ENCODE measurements at regions of chr1 and their contacts with region 1.

Region 1: GRCh38 chr1:56578963-56579875 is at the start of gene PLPP3:
- DNase-seq: peak; percentile 86
- ATAC-seq: peak; percentile 78
- H3K4me3 ChIP-seq: peak within 1 kb of the TSS; percentile 94
- H3K27ac ChIP-seq: peak within 1 kb of the TSS; percentile 68
- H3K4me1 ChIP-seq: peaks cover 33% of the 10 kb centered on the region
- H3K27me3 ChIP-seq: no peaks in the 10 kb centered on the region
- CTCF ChIP-seq: peak; percentile 56
- total RNA-seq, gene PLPP3: 32.8 and 41.0 TPM in 2 replicates

Region 2: DNA sequence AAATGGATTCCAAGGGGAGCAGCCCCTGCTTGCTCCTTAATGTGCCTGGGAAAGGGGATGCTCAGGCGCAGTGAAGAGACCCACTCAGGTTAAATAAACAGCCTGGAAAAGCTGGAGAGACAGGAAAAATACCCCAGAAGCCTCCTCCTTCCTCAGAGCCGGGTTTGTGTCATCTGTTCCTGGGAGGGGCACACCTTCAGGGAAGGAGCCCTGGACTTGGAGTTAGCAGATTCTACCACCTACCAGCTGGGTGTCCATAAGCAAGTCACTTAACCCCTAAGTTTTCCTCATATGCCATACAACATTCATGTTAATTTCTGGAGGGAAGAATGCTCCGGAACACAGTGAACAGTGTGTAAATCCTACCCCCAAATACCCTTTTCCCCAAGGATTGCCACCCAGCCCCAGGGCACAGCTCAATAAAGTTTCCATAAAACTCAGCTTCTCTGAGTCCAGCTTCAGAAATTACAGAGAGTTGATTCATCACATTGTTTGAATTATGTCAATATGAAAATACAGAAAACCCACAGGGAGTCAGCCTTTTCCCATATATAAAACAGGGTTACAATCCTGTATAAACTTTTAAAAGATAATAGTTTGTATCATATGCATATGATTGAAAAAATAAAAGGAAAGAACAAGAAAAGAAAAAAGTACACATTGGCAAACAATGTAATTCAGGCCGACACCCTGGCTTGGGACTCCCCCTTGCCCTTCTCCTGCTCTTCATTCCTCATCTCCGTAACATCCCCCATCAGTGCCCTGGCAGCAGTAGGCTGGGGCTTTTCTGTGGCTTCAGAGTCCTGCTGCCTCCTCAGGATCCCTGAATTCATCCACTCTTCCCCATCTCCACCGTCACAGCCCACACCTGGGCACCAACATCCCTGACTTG is 1072.3 kb before region 1 on chr1:
- CTCF ChIA-PET with region 1: interaction called, 6 read pairs
- POLR2A ChIA-PET with region 1: interaction called, 5 read pairs
- intact Hi-C with region 1: loop called (anchors 1 kb)
- DNase-seq: peak; percentile 96
- ATAC-seq: peak; percentile 78
- H3K4me3 ChIP-seq: peak overlapping the region; percentile 33; the same call in 1 of the 2 replicates
- H3K27ac ChIP-seq: peak overlapping the region; percentile 95
- H3K4me1 ChIP-seq: peaks cover 49% of the 10 kb centered on the region
- H3K27me3 ChIP-seq: no peaks in the 10 kb centered on the region
- CTCF ChIP-seq: peak; percentile 49; the same call in 1 of the 2 replicates

Region 3: GRCh38 chr1:55868026-55868425 is 711.2 kb before region 1 on chr1:
- CTCF ChIA-PET with region 1: interaction called, 4 read pairs
- POLR2A ChIA-PET with region 1: no interaction called
- intact Hi-C with region 1: loop called (anchors 2 kb)
- DNase-seq: peak; percentile 48
- ATAC-seq: peak; percentile 45
- H3K4me3 ChIP-seq: no peak overlapping the region
- H3K27ac ChIP-seq: peak overlapping the region; percentile 25
- H3K4me1 ChIP-seq: peaks cover 23% of the 10 kb centered on the region
- H3K27me3 ChIP-seq: no peaks in the 10 kb centered on the region
- CTCF ChIP-seq: peak; percentile 40; the same call in 1 of the 2 replicates

Region 4: GRCh38 chr1:56064705-56065104 is 514.5 kb before region 1 on chr1:
- CTCF ChIA-PET with region 1: no interaction called
- POLR2A ChIA-PET with region 1: no interaction called
- intact Hi-C with region 1: loop called (anchors 5 kb)
- DNase-seq: peak; percentile 92
- ATAC-seq: peak; percentile 74
- H3K4me3 ChIP-seq: no peak overlapping the region
- H3K27ac ChIP-seq: peak overlapping the region; percentile 25; the same call in 1 of the 2 replicates
- H3K4me1 ChIP-seq: peaks cover 50% of the 10 kb centered on the region
- H3K27me3 ChIP-seq: no peaks in the 10 kb centered on the region
- CTCF ChIP-seq: no peak

Region 5: DNA sequence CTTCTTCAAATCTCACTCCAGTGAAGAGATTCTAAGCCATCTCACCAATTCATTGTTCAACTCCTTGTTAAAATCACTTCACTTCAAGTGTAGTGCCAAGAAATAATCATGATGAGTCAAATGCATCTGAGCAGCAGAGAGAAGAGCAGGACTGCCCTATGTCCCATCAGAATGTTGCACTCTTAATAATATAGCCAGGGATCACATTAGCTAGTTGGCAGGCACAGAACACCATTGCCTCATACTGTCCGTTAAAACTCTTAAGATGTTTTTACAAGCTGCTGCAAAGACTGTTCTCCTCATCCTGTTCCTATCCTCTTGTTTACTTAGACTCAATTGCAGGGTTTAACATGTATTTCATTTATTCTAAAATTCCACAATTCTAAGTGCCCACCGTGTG is 432.8 kb before region 1 on chr1:
- CTCF ChIA-PET with region 1: no interaction called
- POLR2A ChIA-PET with region 1: no interaction called
- intact Hi-C with region 1: no loop called
- DNase-seq: peak; percentile 28
- ATAC-seq: peak; percentile 94
- H3K4me3 ChIP-seq: no peak overlapping the region
- H3K27ac ChIP-seq: no peak overlapping the region
- H3K4me1 ChIP-seq: no peaks in the 10 kb centered on the region
- H3K27me3 ChIP-seq: no peaks in the 10 kb centered on the region
- CTCF ChIP-seq: no peak

Region 6: DNA sequence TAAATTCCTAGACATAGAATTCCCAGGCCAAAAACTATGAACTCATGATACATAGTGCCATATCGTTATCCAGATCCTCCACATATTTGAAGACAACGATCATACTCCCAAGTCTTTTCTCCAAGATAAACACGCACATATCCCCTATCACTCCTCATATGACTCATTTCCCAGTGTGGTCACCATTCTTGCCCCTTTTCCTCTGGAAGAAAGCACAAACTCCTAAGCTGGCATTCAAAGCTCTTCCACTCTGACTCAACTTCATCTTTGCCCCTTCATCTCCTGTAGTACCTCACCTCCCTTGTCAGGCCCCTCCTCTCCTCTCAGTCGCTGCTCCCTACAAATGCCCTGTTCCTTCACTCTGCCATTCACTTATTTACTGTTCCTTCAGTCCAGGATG is 277.4 kb before region 1 on chr1:
- CTCF ChIA-PET with region 1: no interaction called
- POLR2A ChIA-PET with region 1: no interaction called
- intact Hi-C with region 1: loop called (anchors 10 kb)
- DNase-seq: peak; percentile 85
- ATAC-seq: peak; percentile 27
- H3K4me3 ChIP-seq: peak overlapping the region; percentile 42; the same call in 1 of the 2 replicates
- H3K27ac ChIP-seq: peak overlapping the region; percentile 68
- H3K4me1 ChIP-seq: peaks cover 28% of the 10 kb centered on the region
- H3K27me3 ChIP-seq: no peaks in the 10 kb centered on the region
- CTCF ChIP-seq: no peak

Region 7: DNA sequence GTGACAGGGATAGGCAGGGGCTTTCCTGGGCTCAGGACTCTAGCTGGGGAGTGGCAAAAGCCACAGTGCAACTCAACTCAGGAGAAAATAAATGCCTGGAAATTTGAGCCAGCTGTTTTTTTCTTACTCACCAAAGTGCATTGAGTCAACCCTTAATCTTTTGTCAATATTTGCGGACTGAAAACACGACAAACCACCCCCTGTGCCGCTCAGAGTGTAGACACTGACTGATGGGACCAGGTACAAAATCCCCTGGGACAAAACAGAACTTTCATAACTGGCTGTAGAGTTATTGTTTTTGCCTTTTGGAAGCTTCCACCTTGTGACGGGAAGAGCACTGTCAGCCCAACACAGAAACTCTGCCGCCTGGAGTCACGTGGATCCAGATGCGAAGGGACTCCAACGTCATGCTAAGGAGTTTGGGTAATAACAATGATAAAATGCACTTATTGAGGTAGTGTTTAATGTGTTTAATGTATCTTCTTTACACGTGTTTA is 164.4 kb before region 1 on chr1:
- CTCF ChIA-PET with region 1: no interaction called
- POLR2A ChIA-PET with region 1: interaction called, 8 read pairs
- intact Hi-C with region 1: loop called (anchors 2 kb)
- DNase-seq: peak; percentile 95
- ATAC-seq: peak; percentile 96
- H3K4me3 ChIP-seq: peak overlapping the region; percentile 7; the same call in 1 of the 2 replicates
- H3K27ac ChIP-seq: peak overlapping the region; percentile 68
- H3K4me1 ChIP-seq: peaks cover 34% of the 10 kb centered on the region
- H3K27me3 ChIP-seq: no peaks in the 10 kb centered on the region
- CTCF ChIP-seq: no peak

Region 8: GRCh38 chr1:56461158-56462127 is 117.8 kb before region 1 on chr1:
- CTCF ChIA-PET with region 1: no interaction called
- POLR2A ChIA-PET with region 1: no interaction called
- intact Hi-C with region 1: no loop called
- DNase-seq: no peak
- ATAC-seq: no peak
- H3K4me3 ChIP-seq: no peak overlapping the region
- H3K27ac ChIP-seq: no peak overlapping the region
- H3K4me1 ChIP-seq: peaks cover 9% of the 10 kb centered on the region
- H3K27me3 ChIP-seq: no peaks in the 10 kb centered on the region
- CTCF ChIP-seq: no peak

Region 9: DNA sequence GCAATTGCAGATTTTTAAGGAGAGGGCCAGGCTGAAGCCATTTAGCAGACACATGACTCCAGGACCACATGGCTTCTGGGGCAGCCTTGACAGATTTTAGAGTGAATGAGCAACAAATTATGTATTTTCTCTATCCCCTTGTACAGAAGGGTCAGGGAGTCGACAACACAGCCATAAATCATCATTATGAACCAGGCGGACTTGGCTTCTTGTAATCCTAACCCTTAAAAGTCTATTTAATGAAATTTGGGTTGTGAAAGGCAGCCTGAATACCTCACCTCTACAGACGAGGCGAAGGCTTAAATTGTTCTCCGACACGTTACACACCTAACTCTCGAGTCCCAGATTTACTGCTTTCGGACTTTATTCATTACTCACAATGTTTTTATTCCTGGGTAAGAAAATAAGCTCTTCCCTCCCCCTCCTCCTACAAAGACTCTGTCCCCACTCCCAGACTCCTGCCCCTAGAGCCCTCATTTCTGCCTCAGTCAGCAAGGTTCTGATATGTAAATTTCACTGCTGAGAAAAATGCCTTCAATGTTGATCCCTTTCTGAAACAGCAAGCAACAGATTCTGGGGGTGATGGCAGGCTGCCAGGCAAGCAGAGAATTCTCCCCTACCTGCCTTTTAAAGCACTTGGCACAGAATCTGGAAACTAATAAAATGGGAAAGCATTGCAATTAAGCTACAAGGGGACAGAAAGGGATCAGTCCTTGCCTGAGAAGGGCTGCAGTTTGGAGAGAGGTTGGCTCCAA is 51.5 kb before region 1 on chr1:
- CTCF ChIA-PET with region 1: no interaction called
- POLR2A ChIA-PET with region 1: no interaction called
- intact Hi-C with region 1: loop called (anchors 2 kb)
- DNase-seq: no peak
- ATAC-seq: no peak
- H3K4me3 ChIP-seq: no peak overlapping the region
- H3K27ac ChIP-seq: no peak overlapping the region
- H3K4me1 ChIP-seq: peaks cover 33% of the 10 kb centered on the region
- H3K27me3 ChIP-seq: no peaks in the 10 kb centered on the region
- CTCF ChIP-seq: no peak

Region 10: DNA sequence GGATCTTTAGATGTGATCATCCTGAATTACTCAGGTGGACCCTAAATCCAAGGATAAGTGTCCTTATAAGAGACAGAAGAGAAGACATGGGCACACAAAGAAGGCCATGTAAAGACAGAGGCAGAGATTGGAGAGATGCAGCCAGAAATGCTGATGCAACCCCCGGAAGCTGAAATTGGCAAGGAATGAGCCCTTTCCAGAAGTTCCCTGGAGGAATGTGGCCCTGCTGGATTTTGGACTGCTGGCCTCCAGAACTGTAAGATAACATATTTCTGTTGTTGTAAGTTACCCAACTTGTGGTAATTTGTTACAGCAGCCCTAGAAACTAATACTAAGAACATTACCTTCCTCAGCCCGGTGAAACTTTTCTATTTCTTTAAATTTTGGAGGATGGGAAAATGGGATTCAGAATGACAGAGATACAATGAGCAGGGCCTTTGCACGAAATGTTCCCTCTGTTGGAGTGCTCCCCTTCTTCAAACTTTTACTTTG is 11.3 kb after region 1 on chr1:
- CTCF ChIA-PET with region 1: no interaction called
- POLR2A ChIA-PET with region 1: no interaction called
- intact Hi-C with region 1: no loop called
- DNase-seq: peak; percentile 54
- ATAC-seq: no peak
- H3K4me3 ChIP-seq: no peak overlapping the region
- H3K27ac ChIP-seq: no peak overlapping the region
- H3K4me1 ChIP-seq: peaks cover 7% of the 10 kb centered on the region; the same call in 1 of the 2 replicates
- H3K27me3 ChIP-seq: no peaks in the 10 kb centered on the region
- CTCF ChIP-seq: no peak

Measured in PC-3 (cell line).